Activated CD4-positive, alpha-beta memory T cell treated with anti-CD3 and anti-CD28 coated beads, Interleukin-2, amount 10 ng/mL, durations not matched to agents 7 days and 5 days (primary cell): ENCODE measurements at regions of chr15 and their contacts with region 1.

Region 1: GRCh38 chr15:64809649-64810496 is 15.6 kb downstream of the PIF1 start:
- DNase-seq: peak; percentile 76
- H3K4me3 Mint-ChIP-seq: no peak overlapping the region
- H3K27ac Mint-ChIP-seq: no peak overlapping the region
- H3K4me1 Mint-ChIP-seq: peaks cover 2% of the 10 kb centered on the region
- H3K27me3 Mint-ChIP-seq: peaks cover 8% of the 10 kb centered on the region

Region 2: DNA sequence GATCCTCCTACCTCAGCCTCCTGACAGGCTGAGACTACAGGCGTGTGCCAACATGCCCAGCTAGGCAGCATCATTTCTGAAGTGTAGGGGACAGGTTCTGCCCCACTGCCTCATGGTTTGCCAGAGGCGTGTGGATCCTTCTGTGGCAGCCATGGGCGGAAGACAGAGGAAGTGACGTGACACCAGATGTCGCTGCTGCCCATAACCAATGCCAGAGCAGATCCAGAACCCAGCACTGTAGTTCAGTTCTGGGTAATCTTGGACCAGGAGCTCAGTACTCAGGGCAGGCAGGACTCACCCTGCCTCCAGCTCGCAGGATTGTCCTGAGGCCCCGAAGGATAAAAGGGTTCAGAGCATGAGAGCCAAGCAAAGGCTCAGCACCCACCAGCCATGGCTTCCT is 42.7 kb before region 1 on chr15:
- CTCF ChIA-PET with region 1: interaction called, 14 read pairs
- POLR2A ChIA-PET with region 1: no interaction called
- DNase-seq: peak; percentile 21
- H3K4me3 Mint-ChIP-seq: no peak overlapping the region
- H3K27ac Mint-ChIP-seq: no peak overlapping the region
- H3K4me1 Mint-ChIP-seq: peaks cover 10% of the 10 kb centered on the region
- H3K27me3 Mint-ChIP-seq: peaks cover 4% of the 10 kb centered on the region